Mucosa of descending colon (tissue), 3 donors: ENCODE measurements at regions of chr4 and their contacts with region 1.

Region 1: GRCh38 chr4:73019462-73020047 is 50.0 kb downstream of the COX18 start:
- DNase-seq: peak in 1 of 3 donors; percentile 37
- ATAC-seq: no peak
- H3K4me3 ChIP-seq: no peak overlapping the region
- H3K4me1 ChIP-seq: no peaks in the 10 kb centered on the region
- CTCF ChIP-seq: peak; percentile 19

Region 2: DNA sequence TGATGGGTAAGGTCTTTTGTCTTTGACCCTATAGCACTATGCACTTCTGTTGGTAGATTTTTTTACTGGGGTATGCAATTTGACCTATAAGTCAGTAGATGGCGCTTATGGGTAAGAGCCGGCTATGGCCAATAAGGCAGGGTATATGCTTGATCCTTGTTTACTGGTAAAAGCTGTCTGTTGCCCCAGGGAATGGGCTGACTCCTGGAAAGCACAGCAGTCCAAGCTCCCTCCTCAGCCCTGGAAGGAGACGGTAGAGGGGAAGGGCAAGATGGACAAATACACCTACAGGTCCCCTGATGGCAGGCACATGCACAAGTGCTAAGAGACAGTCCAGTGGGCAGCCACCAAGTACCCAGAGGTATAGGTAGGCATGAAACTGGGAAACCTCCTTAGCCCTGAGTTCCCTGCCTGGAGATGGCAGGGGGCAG is 514.2 kb before region 1 on chr4:
- intact Hi-C with region 1: loop called in 1 of 2 experiments (anchors 10 kb)
- DNase-seq: no peak
- ATAC-seq: peak; percentile 58
- H3K4me3 ChIP-seq: no peak overlapping the region
- H3K4me1 ChIP-seq: no peaks in the 10 kb centered on the region
- CTCF ChIP-seq: no peak

Region 3: DNA sequence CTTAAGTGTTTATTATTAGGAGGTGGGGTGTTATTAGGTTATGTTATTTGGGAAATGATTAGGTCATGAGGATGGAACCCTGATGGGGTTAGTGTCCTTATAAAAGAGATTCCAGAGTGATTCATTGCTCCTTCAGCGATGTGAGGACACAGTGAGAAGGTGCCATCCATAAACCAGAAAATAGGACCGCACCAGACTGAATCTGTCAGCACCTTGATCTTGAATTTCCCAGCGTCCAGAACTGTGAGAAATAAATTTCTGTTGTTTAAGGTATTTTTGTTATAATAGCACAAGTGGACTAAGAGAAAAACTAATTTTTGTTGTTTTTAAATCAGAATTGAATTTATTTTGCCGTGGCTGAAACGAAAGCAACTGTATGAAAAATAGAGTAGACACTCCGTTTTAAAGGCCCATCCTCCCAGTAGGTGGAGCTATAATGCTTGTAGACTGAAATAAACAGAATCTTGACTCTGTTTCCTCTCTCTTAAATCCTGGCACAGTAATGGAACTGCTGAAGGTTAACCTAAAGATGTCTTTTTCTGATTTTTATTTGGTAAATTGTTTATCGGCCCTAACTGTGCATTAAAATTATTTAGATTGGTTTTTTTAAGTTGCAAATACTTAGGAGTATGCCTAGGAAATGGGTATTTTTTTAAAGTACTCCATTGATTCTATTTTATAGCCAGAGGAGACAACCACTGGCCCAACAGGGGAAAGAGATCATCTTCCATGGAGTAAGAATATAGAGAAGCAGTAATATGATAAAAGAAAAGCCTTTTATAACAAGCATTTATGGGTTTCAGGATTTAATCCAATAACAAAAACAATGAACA is 317.4 kb before region 1 on chr4:
- intact Hi-C with region 1: loop called in 1 of 2 experiments (anchors 5 kb)
- DNase-seq: peak in 1 of 3 donors; percentile 73
- ATAC-seq: peak; percentile 38
- H3K4me3 ChIP-seq: no peak overlapping the region
- H3K4me1 ChIP-seq: no peaks in the 10 kb centered on the region
- CTCF ChIP-seq: peak; percentile 22

Region 4: GRCh38 chr4:73315091-73315490 is 295.5 kb after region 1 on chr4:
- intact Hi-C with region 1: no loop called
- DNase-seq: no peak
- ATAC-seq: peak; percentile 42
- H3K4me3 ChIP-seq: no peak overlapping the region
- H3K4me1 ChIP-seq: no peaks in the 10 kb centered on the region
- CTCF ChIP-seq: no peak